PC-9 (cell line): ENCODE measurements at regions of chr3 and their contacts with region 1.

Region 1: DNA sequence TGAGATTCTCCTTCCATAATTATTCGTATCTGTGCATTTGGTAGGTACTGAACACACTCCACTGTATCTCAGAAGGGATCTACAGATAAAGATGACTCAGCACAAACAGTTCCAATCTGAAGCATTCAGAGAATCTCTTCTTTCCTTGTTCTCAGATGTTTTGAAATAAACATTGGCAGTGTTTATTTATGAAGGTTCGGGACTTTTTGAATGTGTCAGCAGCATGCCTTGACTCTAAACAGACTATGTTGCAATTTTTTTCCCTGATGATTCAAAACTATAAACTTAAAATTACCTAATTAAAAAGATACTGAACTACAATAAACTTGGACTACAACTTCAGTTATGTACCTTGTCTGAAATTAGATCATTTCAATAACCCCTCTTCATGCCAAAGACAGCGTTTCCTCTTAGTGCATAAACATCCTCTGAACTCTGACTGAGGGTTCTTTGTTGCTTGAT is 612.9 kb upstream of the TBL1XR1 start:
- DNase-seq: peak in 1 of 2 experiments; percentile 99
- H3K4me3 ChIP-seq: no peak overlapping the region
- H3K27ac ChIP-seq: peak overlapping the region; percentile 82
- H3K4me1 ChIP-seq: peaks cover 34% of the 10 kb centered on the region
- H3K27me3 ChIP-seq: no peaks in the 10 kb centered on the region
- CTCF ChIP-seq: no peak

Region 2: DNA sequence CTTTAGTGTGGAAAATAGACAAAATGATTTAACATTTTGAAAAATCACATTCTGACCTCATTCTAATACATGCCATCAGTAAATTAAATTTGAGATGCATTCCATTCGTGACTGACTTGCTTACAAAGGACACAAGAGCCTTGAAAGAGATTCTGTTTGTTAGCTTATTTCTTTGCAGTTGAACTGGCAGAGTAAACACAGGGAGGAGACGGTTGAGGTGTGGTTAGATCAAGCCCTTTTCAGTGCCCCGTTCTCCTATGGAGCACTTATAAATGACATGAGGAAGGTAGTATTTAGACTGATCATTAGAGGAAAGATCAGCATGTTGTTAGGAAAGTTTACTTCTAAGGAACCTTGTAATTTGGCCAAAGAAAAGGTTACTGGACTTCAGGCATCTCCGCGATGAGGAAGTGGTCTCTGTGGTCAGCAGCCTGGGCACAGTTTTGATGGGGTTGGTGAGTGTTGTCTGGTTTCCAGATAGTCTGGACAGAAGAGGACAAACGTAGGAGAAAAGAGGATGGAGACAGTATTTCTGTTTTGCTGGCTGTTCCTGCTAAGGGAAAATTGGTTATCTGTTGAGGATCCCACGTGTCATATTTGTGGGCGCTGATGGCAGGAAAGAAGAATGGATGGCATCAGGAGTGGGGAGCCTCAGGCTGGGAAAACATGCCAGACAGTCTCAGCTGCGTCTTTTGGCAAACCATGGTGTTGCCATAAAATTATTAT is 284.0 kb before region 1 on chr3:
- CTCF ChIA-PET with region 1: no interaction called
- POLR2A ChIA-PET with region 1: no interaction called
- intact Hi-C with region 1: loop called (anchors 5 kb)
- DNase-seq: peak; percentile 25 to 87
- H3K4me3 ChIP-seq: no peak overlapping the region
- H3K27ac ChIP-seq: no peak overlapping the region
- H3K4me1 ChIP-seq: peaks cover 79% of the 10 kb centered on the region
- H3K27me3 ChIP-seq: no peaks in the 10 kb centered on the region
- CTCF ChIP-seq: no peak

Region 3: DNA sequence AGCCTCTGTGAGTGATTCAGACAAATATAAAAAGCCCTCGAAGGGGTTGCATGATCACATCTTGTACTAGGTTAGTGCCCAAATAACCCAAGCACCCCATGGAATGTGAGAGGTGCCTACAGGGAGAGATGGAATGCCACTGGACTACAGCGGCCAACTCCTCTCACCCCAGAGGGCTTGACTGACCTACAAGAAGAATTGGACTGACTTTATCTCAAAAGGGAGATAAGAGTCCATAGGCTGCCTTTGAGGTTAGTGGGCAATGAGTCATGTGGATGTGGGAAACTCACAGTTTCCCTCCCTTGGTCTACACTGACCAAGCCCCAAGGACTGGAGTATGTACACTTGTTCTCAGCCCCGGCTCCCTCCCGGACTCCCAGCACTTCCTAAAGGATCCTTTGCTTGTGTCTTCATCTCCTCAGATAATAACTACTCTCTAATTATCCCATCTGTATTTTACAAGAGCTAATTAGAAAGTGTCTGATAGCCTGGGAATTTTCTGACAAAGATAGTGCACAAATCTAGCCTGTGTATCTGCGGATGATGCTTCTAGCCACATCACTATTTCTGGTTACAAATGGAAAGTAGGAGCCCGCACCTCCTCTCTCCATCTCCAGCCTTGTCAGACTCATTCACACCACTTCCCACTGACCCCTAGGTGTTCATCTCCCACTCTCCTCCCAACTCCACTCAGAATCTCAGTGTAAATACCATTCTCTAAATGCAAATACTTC is 65.2 kb before region 1 on chr3:
- CTCF ChIA-PET with region 1: no interaction called
- POLR2A ChIA-PET with region 1: no interaction called
- intact Hi-C with region 1: loop called (anchors 5 kb)
- DNase-seq: peak; percentile 72 to 75
- H3K4me3 ChIP-seq: no peak overlapping the region
- H3K27ac ChIP-seq: no peak overlapping the region
- H3K4me1 ChIP-seq: peaks cover 13% of the 10 kb centered on the region
- H3K27me3 ChIP-seq: no peaks in the 10 kb centered on the region
- CTCF ChIP-seq: no peak

Region 4: DNA sequence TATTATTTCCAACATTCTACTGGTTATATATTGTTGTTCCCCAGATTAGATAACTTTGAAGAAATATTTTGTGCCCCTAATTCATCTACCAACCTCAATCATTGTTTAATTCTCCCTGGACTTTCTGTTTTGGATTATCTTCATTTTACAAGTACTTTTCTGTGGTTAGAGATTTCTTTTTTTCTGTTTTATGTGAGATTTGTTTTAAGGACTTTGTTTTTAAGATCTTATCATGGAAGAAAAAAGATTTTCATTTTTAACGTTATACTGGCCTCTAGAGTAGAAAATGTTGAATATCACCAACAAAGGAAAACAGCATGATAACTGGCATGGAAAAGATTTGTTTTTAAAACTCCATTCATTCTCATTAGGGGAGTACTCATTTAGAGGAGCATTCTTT is 515.1 kb after region 1 on chr3:
- CTCF ChIA-PET with region 1: no interaction called
- POLR2A ChIA-PET with region 1: no interaction called
- intact Hi-C with region 1: loop called (anchors 5 kb)
- DNase-seq: no peak
- H3K4me3 ChIP-seq: no peak overlapping the region
- H3K27ac ChIP-seq: no peak overlapping the region
- H3K4me1 ChIP-seq: peaks cover 13% of the 10 kb centered on the region
- H3K27me3 ChIP-seq: no peaks in the 10 kb centered on the region
- CTCF ChIP-seq: peak; percentile 72